Upper lobe of right lung (tissue), 1 donor: ENCODE measurements at regions of chr15 and their contacts with region 1.

Region 1: DNA sequence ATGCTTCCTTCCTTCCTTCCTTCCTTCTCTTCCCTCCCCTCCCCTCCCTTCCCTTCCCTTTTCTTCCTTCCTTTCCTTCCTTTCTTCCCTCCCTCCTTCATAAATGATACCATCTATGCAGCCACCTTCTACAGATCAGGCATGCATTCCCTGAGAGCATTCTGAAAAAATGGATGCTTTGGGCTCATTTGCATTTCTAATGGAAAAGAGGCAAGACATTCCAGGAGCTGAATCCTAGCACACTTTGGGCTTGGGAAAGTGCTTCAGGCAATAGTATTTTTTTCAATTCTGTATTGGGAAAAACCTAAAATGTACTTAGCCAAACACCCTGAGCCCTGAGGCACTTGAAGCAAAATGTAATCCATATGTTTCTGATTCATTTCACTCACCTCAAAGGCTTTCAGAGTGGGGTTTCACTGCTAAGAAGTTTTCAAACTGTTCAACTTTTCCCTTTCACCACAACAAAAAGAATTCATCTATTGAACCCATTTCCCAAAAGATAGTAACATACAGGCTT is 220.1 kb upstream of the RORA start:
- DNase-seq: no peak
- ATAC-seq: no peak
- H3K4me3 ChIP-seq: no peak overlapping the region
- H3K27ac ChIP-seq: no peak overlapping the region
- H3K4me1 ChIP-seq: no peaks in the 10 kb centered on the region
- H3K27me3 ChIP-seq: no peaks in the 10 kb centered on the region
- CTCF ChIP-seq: no peak

Region 2: DNA sequence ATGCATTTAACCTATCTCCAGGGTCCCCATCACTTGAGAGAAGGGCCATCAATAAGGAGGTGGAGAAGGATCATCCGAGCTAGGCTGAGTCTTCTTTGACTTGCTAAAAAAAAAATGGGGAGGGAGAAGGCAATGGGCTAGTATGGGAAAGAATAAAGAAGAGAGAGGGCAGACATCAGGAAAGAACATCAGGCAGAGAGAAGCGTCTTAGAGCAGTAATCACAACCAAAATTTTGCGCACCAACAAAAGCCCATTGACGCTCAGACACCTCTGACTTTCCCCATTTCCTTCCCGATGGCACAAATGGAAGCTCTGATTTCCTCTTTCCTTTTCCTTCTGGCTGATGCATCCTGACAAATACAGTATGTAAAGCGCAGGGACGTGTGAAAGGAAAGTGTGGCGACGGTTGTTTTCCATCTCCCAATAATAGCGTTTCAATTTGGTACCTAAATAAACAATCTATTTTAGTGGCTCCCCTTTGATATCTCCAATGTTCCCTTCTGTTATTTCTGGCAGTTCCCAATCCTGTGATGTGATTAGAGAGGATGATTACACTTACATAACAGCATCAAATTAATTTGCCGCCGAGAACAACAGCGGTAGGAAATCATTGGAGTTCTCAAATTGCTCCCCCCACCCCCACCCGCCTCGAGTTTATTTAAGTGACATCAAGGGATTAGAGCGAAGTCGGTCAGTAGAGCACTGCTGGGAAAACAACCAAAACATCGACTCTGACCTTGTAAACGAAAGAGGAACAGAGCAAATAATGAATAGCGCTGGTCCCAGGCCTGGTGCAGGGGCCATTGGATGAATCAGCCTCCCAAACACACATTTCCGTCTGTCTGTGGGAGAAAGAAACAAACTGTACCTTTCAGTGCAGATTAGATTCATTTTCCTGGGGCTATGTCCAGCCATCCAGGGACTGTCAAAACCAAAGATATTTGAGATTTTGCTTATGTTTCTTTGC is 697.0 kb before region 1 on chr15:
- intact Hi-C with region 1: loop called (anchors 5 kb)
- DNase-seq: no peak
- ATAC-seq: peak; percentile 71
- H3K4me3 ChIP-seq: no peak overlapping the region
- H3K27ac ChIP-seq: peak overlapping the region; percentile 7
- H3K4me1 ChIP-seq: no peaks in the 10 kb centered on the region
- H3K27me3 ChIP-seq: no peaks in the 10 kb centered on the region
- CTCF ChIP-seq: no peak